CD4-positive, alpha-beta T cell (primary cell): ENCODE measurements at regions of chr16 and their contacts with region 1.

Region 1: DNA sequence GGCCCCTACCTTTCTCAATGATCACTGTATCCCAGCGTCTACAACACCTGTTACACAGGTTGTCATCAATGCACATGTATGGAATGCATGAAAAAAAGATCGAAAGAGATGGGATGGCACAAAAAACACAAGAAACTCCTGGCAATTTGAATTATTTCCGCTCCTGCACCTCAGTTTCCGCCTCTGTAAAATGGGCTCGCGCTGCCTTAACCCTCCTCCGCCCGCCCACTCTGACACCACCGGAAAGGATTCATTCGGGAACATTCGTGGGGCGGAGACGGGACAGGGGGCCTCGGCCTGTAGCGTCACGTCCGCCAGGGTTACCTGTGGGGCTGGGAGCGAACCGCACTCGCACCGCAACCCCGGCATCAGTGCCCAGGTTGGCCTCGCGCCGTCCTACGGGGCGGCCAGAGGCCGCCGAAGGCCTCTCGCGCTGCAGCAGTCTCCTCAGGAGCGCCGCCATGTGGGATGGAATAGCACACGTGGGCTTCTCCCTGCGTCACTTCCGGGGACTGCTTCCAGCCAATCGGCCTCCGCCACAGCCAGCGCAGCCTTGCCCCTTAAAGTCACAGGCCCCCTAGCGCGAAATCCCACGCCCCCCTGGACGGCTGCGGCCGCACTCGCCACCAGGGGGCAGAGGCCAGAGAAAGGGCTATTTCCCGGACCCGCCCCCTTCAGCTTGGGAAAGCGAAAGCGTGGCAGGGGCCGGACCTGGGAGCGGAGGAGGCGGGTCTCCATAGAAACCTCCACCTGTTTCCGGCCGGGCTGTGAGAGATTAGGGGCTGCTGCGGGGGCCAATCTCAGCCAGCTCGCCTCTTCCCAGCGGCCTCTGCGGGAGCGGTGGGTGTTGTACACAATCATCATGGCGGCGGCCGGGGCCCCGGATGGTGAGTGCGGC is at the starts of genes EARS2 and UBFD1:
- DNase-seq: peak; percentile 85 to 98 (median 90)
- ATAC-seq: peak; percentile 88
- H3K4me3 ChIP-seq: peak within 1 kb of the TSS; percentile 92
- H3K4me3 Mint-ChIP-seq: peak within 1 kb of the TSS; percentile 98
- H3K27ac ChIP-seq: peak within 1 kb of the TSS; percentile 77 to 97
- H3K27ac Mint-ChIP-seq: peak within 1 kb of the TSS; percentile 96
- H3K4me1 ChIP-seq: peaks cover 20% of the 10 kb centered on the region
- H3K4me1 Mint-ChIP-seq: peaks cover 41% of the 10 kb centered on the region
- H3K27me3 ChIP-seq: no peaks in the 10 kb centered on the region
- H3K27me3 Mint-ChIP-seq: no peaks in the 10 kb centered on the region
- CTCF ChIP-seq: peak; percentile 75
- total RNA-seq, gene EARS2: 7.9 to 8.0 TPM
- total RNA-seq, gene UBFD1: 53.7 to 59.5 TPM

Region 2: DNA sequence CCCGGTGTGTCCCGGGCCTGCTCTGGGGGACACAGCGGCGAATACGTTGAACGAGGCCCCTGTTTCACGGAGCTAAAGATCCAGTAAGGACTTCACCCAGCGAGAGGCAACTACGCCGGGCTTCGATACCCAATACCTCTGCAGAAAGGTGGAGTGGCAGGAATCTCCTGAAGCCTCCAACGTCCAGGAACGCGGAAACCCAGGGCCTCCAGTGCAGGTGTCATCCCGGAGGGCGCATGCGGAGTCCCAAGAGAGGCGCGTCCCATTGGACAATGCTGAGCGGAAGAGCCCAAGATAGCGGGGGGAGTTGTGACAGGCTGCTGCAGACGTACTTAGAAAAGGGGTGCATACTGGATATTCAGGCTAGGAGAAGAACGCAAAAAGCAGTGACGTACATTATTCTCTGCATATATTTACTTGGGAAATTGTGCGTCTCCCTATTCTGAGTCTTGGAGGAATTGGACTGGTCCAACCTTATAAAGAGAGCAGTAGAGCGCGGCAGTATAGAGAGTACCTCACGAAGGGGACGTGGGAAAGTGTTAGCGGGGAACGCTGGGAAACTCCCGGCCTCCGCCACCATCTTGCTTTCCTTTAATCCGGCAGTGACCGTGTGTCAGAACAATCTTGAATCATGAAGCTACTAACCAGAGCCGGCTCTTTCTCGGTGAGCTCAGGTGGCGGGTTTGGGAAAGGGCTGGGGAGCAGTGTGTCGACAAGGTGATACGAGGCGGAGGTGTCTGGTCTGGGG is 1604.2 kb before region 1 on chr16 and contains the start of gene UQCRC2:
- CTCF ChIA-PET with region 1: no interaction called
- POLR2A ChIA-PET with region 1: no interaction called
- intact Hi-C with region 1: loop called in 1 of 2 experiments (anchors 10 kb)
- DNase-seq: peak; percentile 76 to 95 (median 82)
- ATAC-seq: peak; percentile 87
- H3K4me3 ChIP-seq: peak within 1 kb of the TSS; percentile 92
- H3K4me3 Mint-ChIP-seq: peak within 1 kb of the TSS; percentile 94
- H3K27ac ChIP-seq: peak within 1 kb of the TSS; percentile 93 to 96
- H3K27ac Mint-ChIP-seq: peak within 1 kb of the TSS; percentile 94
- H3K4me1 ChIP-seq: peaks cover 52% of the 10 kb centered on the region
- H3K4me1 Mint-ChIP-seq: peaks cover 62% of the 10 kb centered on the region
- H3K27me3 ChIP-seq: no peaks in the 10 kb centered on the region
- H3K27me3 Mint-ChIP-seq: no peaks in the 10 kb centered on the region
- CTCF ChIP-seq: no peak
- total RNA-seq, gene UQCRC2: 142 to 146 TPM

Region 3: DNA sequence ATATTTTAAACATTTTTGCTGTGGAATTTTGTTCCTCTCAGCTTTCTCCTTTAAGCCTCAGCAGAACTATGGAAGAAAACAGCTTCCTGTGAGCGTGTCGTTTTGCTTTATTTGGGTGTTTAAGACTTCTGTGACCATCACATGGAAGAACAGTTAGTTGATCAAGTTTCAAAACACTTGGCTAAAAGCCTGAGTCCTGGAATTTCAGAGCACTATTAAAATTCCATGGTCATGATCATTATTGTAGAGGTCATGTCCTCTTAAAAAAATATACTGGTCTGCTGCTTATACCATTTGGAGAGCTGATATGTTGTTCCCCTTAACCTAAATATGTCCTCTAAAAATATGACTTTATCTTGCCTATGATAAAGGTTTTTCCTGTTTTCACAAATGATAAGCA is 1170.2 kb before region 1 on chr16:
- CTCF ChIA-PET with region 1: no interaction called
- POLR2A ChIA-PET with region 1: no interaction called
- intact Hi-C with region 1: no loop called
- DNase-seq: no peak
- ATAC-seq: no peak
- H3K4me3 ChIP-seq: no peak overlapping the region
- H3K4me3 Mint-ChIP-seq: no peak overlapping the region
- H3K27ac ChIP-seq: no peak overlapping the region
- H3K27ac Mint-ChIP-seq: no peak overlapping the region
- H3K4me1 ChIP-seq: peaks cover 3% of the 10 kb centered on the region
- H3K4me1 Mint-ChIP-seq: peaks cover 11% of the 10 kb centered on the region
- H3K27me3 ChIP-seq: no peaks in the 10 kb centered on the region
- H3K27me3 Mint-ChIP-seq: no peaks in the 10 kb centered on the region
- CTCF ChIP-seq: no peak

Region 4: DNA sequence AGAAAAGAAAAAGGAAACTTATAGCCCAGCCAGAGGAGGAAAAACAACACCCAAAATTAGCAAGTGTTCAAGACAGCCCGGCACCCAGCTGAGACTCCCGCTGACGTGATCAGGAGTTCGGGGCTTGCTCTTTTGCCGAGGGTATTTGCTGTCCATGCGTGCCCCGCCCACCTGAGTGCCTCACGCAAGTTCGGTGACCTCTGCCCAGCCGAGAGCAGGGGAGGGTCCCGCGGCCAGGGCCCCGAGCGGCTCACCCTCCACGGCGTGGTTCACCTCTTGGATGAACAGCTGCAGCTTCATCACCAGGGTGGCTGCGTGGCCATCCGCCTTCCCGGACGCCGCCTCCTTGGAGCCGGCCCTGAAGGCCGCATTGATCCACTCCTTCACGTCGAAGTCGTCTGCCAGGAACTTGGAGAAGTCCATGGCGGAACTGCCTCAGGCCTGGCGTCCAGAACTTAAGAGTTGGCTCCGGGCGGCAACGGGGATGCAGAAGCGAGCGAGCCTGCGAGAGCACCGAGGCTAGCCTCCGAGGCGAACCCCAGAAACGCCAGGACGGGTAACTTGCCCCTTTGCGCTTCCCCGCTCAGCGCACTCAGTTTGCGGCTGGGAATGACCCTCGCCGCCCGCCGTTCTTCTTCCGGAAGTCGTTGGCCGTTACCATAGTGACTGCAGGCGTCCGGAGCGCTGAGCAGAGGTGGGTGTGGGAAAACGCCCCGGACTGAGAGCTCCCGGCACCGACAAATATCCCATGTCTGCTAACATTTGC is 104.4 kb before region 1 on chr16 and contains the start of gene COG7:
- CTCF ChIA-PET with region 1: no interaction called
- POLR2A ChIA-PET with region 1: no interaction called
- intact Hi-C with region 1: loop called in 1 of 2 experiments (anchors 2 kb)
- DNase-seq: peak; percentile 74 to 88 (median 78)
- ATAC-seq: peak; percentile 89
- H3K4me3 ChIP-seq: peak within 1 kb of the TSS; percentile 93
- H3K4me3 Mint-ChIP-seq: peak within 1 kb of the TSS; percentile 94
- H3K27ac ChIP-seq: peak within 1 kb of the TSS in 1 of 2 donors; percentile 13
- H3K27ac Mint-ChIP-seq: peak within 1 kb of the TSS; percentile 79
- H3K4me1 ChIP-seq: peaks cover 15% of the 10 kb centered on the region
- H3K4me1 Mint-ChIP-seq: peaks cover 40% of the 10 kb centered on the region
- H3K27me3 ChIP-seq: no peaks in the 10 kb centered on the region
- H3K27me3 Mint-ChIP-seq: no peaks in the 10 kb centered on the region
- CTCF ChIP-seq: no peak
- total RNA-seq, gene COG7: 12.6 to 13.6 TPM

Region 5: DNA sequence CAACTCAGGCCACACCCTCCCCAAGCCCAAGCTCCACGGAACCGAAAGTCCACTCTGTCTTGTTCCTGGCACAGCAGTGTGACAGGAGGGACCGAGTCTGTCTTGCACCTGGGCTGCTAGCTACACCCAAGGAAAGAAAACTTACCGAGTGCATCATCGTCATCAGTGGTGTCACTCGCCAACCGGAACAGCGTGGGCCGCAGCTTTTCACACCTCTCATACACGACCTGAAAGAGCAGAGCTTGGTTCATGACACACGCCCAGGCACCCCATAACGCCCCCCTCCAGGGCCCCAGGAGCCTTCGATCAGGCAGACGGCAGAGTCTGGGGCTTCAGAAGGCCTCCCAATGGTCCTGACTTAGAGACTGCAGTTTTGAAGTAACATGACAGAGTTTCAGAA is 74.4 kb before region 1 on chr16:
- CTCF ChIA-PET with region 1: no interaction called
- POLR2A ChIA-PET with region 1: no interaction called
- intact Hi-C with region 1: no loop called
- DNase-seq: peak in 5 of 14 experiments; percentile 28 to 83 (median 69)
- ATAC-seq: peak; percentile 50
- H3K4me3 ChIP-seq: no peak overlapping the region
- H3K4me3 Mint-ChIP-seq: no peak overlapping the region
- H3K27ac ChIP-seq: peak overlapping the region in 1 of 2 donors; percentile 41
- H3K27ac Mint-ChIP-seq: peak overlapping the region; percentile 65
- H3K4me1 ChIP-seq: no peaks in the 10 kb centered on the region
- H3K4me1 Mint-ChIP-seq: no peaks in the 10 kb centered on the region
- H3K27me3 ChIP-seq: no peaks in the 10 kb centered on the region
- H3K27me3 Mint-ChIP-seq: no peaks in the 10 kb centered on the region
- CTCF ChIP-seq: no peak

Region 6: GRCh38 chr16:23510164-23510914 is 46.8 kb before region 1 on chr16 and contains the start of gene GGA2:
- CTCF ChIA-PET with region 1: interaction called, 5 read pairs
- POLR2A ChIA-PET with region 1: interaction called, 17 read pairs
- intact Hi-C with region 1: loop called (anchors 1 to 2 kb)
- DNase-seq: peak; percentile 65 to 90 (median 74)
- ATAC-seq: peak; percentile 86
- H3K4me3 ChIP-seq: peak within 1 kb of the TSS; percentile 66
- H3K4me3 Mint-ChIP-seq: peak within 1 kb of the TSS; percentile 99
- H3K27ac ChIP-seq: peak within 1 kb of the TSS in 1 of 2 donors; percentile 13
- H3K27ac Mint-ChIP-seq: peak within 1 kb of the TSS; percentile 84
- H3K4me1 ChIP-seq: peaks cover 63% of the 10 kb centered on the region
- H3K4me1 Mint-ChIP-seq: peaks cover 58% of the 10 kb centered on the region
- H3K27me3 ChIP-seq: no peaks in the 10 kb centered on the region
- H3K27me3 Mint-ChIP-seq: no peaks in the 10 kb centered on the region
- CTCF ChIP-seq: no peak
- total RNA-seq, gene GGA2: 96.5 to 96.9 TPM

Region 7: DNA sequence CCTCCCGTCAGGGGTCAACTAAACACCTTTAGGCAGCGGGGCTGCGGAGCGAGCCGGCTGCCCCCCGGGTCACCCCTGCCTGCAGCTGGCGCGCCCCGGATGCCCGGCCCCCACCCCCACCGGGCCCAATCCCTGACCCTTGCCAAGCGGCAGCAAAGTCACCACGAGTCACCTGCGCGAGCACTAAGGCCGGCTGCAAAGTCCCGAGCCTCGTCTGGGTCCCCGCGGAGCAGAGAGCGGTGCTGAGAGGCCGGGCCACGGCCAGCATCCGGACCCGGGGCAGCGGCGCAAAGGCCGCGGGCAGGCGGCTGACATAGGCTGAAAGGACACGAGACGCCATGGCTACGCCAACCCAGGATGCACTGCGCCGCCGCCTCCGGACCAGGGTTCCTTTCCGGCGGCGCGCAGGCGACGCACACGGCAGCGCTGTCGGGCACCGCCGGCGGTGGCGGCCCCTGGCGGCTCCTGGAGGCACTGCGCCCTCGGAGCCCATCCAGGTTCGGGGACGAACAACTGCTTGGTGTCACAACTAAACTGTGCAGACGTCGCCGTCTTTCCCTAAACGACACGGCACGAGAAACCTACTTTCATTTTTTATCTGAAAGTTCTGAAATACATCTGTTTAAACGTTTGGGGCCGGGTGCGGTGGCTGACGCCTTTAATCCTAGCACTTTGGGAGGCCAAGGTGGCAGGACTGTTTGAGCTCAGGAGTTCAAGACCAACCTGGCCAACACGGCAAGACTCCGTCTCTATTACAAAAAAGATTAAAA is 39.0 kb after region 1 on chr16 and contains the start of gene NDUFAB1:
- CTCF ChIA-PET with region 1: interaction called, 13 read pairs
- POLR2A ChIA-PET with region 1: interaction called, 6 read pairs
- intact Hi-C with region 1: loop called (anchors 1 kb)
- DNase-seq: peak; percentile 81 to 95 (median 90)
- ATAC-seq: peak; percentile 99
- H3K4me3 ChIP-seq: peak within 1 kb of the TSS; percentile 76
- H3K4me3 Mint-ChIP-seq: peak within 1 kb of the TSS; percentile 87
- H3K27ac ChIP-seq: peak within 1 kb of the TSS; percentile 54 to 59
- H3K27ac Mint-ChIP-seq: peak within 1 kb of the TSS; percentile 73
- H3K4me1 ChIP-seq: peaks cover 33% of the 10 kb centered on the region
- H3K4me1 Mint-ChIP-seq: peaks cover 35% of the 10 kb centered on the region
- H3K27me3 ChIP-seq: no peaks in the 10 kb centered on the region
- H3K27me3 Mint-ChIP-seq: no peaks in the 10 kb centered on the region
- CTCF ChIP-seq: peak; percentile 99
- total RNA-seq, gene NDUFAB1: 23.0 to 28.3 TPM

Region 8: DNA sequence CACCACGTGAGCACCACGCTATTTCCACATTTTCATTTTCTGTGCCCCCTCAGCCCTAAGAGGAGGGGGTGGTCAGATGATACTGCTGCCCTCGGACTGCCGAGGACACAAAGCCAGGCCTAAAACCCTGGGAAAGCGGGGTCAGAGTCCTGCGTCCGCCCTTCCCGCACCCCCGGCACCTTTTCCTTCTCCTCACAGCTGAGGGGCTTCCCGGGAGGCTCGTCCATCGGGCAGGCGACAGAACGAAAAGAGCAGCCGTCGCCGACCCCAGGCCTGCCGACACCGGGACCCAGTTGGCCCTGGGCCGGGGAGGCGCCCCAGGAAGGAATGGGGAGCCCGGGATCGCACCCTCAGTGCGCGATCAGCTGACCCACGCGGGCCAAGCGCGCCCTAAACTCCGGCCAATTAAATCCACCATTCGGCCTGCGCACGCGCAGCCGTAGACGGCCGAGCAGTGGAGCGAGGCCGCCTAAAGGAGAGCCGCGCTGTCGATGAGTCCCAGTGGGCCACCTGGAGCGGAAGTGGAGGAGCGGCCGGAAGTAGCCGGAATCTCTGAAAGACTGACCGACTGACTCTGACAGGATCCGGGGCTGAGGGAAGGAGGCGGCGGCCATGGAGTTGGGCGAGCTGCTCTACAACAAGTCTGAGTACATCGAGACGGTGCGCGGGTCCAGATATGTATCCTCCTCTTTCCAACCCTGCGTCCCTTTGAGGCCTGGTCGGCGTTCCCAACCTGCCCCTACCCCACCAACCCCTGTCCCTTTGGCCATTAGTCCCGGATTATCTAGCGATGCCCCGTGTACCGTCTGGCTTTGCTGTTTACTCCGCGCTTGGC is 84.0 kb after region 1 on chr16 and contains the starts of genes DCTN5 and PALB2:
- CTCF ChIA-PET with region 1: no interaction called
- POLR2A ChIA-PET with region 1: interaction called, 7 read pairs
- intact Hi-C with region 1: loop called (anchors 1 kb)
- DNase-seq: peak; percentile 61 to 93 (median 78)
- ATAC-seq: peak; percentile 90
- H3K4me3 ChIP-seq: peak within 1 kb of the TSS; percentile 93
- H3K4me3 Mint-ChIP-seq: peak within 1 kb of the TSS; percentile 99
- H3K27ac ChIP-seq: peak within 1 kb of the TSS; percentile 70 to 75
- H3K27ac Mint-ChIP-seq: peak within 1 kb of the TSS; percentile 96
- H3K4me1 ChIP-seq: peaks cover 21% of the 10 kb centered on the region
- H3K4me1 Mint-ChIP-seq: peaks cover 40% of the 10 kb centered on the region
- H3K27me3 ChIP-seq: no peaks in the 10 kb centered on the region
- H3K27me3 Mint-ChIP-seq: no peaks in the 10 kb centered on the region
- CTCF ChIP-seq: no peak
- total RNA-seq, gene DCTN5: 46.9 to 47.8 TPM
- total RNA-seq, gene PALB2: 3.8 to 5.1 TPM